Activated CD4-positive, alpha-beta T cell treated with anti-CD3 and anti-CD28 coated beads, Interleukin-2, amount 10 ng/mL, durations not matched to agents 24 days and 14 days (primary cell): ENCODE measurements at regions of chr1 and their contacts with region 1.

Region 1: GRCh38 chr1:151443846-151444782 is 15.2 kb downstream of the POGZ start:
- DNase-seq: peak; percentile 90
- H3K4me3 Mint-ChIP-seq: no peak overlapping the region
- H3K27ac Mint-ChIP-seq: no peak overlapping the region
- H3K4me1 Mint-ChIP-seq: peaks cover 31% of the 10 kb centered on the region
- H3K27me3 Mint-ChIP-seq: no peaks in the 10 kb centered on the region

Region 2: DNA sequence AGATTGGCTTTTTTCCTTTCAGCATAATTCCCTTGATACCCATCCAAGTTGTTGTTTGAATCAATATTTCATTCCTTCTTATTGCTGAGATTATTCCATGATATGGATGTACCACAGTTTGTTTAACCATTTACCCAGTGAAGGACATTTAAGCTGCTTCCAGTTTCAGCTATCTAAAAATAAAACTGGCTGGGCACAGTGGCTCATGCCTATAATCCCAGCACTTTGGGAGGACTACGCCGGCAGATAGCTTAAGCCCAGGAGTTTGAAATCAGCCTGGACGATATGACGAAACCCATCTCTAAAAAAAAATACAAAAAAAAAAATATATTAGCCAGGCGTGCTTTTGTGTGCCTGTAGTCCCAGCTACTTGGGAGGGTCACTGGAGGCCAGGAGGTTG is 330.2 kb before region 1 on chr1:
- intact Hi-C with region 1: no loop called
- DNase-seq: no peak
- H3K4me3 Mint-ChIP-seq: no peak overlapping the region
- H3K27ac Mint-ChIP-seq: no peak overlapping the region
- H3K4me1 Mint-ChIP-seq: no peaks in the 10 kb centered on the region
- H3K27me3 Mint-ChIP-seq: no peaks in the 10 kb centered on the region

Region 3: DNA sequence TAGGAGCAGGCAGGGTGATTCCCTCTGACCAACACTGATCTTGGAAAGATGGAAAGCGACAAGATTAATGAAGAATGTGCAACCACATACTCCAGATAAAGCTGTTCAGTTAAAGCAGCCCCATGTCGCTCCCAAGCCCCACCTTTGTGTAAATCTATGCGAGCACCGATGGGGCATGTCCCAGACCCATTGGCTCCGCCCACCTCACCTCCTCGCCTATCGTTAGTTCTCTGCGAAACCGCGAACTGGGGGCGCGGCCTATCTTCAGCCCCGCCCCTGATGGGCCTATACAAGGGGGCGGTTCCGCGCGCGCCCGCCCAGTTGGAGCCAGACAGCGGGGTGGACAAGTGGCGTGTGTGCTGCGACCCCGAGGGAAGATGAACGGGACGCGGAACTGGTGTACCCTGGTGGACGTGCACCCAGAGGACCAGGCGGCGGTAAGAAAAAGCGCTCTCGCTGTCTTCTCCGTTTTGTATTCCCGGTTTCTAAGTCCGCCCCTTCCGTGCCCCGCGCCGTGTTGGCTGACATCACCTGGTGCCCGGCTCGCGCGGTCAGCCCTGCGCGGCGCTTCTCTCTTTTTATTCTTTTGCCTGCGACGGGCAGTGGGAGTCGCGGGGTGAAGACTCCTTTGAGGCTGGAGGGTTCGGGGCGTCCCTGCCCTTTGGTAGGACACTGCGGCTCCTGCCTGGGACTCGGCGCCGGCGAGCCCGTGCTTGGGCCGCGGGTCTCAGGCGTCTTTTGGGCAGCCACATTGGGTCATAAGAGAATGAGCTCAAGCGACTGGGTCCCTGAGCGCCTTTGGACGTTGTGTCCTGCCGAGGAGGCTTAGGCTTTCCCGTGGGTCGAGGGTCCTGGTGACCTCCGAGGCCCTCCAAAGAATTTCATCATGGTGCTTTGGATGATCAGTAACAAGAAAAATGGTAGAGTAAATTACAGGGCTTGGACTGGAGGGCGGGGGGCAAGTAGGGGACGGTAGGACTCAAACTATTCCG is 96.2 kb after region 1 on chr1 and contains the start of gene TUFT1:
- intact Hi-C with region 1: loop called (anchors 5 kb)
- DNase-seq: peak; percentile 98
- H3K4me3 Mint-ChIP-seq: peak within 1 kb of the TSS; percentile 95
- H3K27ac Mint-ChIP-seq: peak within 1 kb of the TSS; percentile 79
- H3K4me1 Mint-ChIP-seq: peaks cover 19% of the 10 kb centered on the region
- H3K27me3 Mint-ChIP-seq: peaks cover 8% of the 10 kb centered on the region
- total RNA-seq, gene TUFT1: 1.7 and 2.1 TPM in 2 replicates

Region 4: GRCh38 chr1:151611832-151612500 is 167.9 kb after region 1 on chr1 and contains the start of gene SNX27:
- intact Hi-C with region 1: no loop called
- DNase-seq: peak; percentile 95
- H3K4me3 Mint-ChIP-seq: peak within 1 kb of the TSS; percentile 93
- H3K27ac Mint-ChIP-seq: peak within 1 kb of the TSS; percentile 90
- H3K4me1 Mint-ChIP-seq: peaks cover 36% of the 10 kb centered on the region
- H3K27me3 Mint-ChIP-seq: peaks cover 9% of the 10 kb centered on the region
- total RNA-seq, gene SNX27: 31.6 and 33.1 TPM in 2 replicates

Region 5: DNA sequence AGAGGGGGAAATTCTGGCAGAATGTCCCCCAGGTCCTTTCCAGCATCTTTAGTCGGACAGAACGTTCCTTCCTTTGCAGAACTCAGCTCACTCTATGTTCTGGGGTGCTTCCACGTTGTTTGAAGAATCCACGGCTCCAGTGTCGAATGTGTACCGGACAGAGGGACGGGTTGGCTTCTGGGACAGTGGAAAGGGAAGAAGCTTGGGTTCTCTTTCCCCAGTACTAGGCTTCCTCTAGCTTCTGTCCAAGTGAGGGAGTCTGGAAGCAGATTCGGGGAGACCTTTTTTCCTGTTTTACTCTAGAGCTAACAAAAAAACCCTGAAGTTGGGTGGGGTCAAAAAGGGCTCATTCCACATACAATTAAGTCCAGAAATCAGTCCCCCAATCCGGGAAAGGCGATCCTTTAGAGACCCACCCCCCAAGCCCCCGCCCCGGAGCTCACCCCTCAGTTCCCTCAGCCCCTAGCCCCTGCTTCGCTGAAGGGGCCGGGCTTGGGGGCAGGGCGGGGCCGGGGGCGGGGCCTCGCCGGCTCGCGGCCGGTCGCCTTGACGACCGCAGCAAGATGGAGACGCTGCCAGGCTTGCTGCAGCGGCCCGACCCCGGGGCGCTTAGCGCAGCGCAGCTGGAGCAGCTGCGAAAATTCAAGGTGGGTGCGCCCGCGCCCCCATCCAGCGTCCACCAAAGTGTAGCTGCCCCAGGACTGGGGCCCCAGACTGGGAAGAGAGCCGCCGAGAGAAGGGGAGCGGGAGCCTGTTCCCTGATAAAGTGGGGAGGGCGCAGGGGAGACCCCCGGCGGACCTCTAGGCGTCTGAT is 277.1 kb after region 1 on chr1 and contains the start of gene RIIAD1:
- intact Hi-C with region 1: loop called (anchors 5 kb)
- DNase-seq: peak; percentile 82
- H3K4me3 Mint-ChIP-seq: peak within 1 kb of the TSS; percentile 85
- H3K27ac Mint-ChIP-seq: no peak within 1 kb of the TSS
- H3K4me1 Mint-ChIP-seq: peaks cover 24% of the 10 kb centered on the region
- H3K27me3 Mint-ChIP-seq: peaks cover 78% of the 10 kb centered on the region
- total RNA-seq, gene RIIAD1: not detected in 2 replicates